Endothelial cell of umbilical vein (primary cell): ENCODE measurements at regions of chr4 and their contacts with region 1.

Region 1: DNA sequence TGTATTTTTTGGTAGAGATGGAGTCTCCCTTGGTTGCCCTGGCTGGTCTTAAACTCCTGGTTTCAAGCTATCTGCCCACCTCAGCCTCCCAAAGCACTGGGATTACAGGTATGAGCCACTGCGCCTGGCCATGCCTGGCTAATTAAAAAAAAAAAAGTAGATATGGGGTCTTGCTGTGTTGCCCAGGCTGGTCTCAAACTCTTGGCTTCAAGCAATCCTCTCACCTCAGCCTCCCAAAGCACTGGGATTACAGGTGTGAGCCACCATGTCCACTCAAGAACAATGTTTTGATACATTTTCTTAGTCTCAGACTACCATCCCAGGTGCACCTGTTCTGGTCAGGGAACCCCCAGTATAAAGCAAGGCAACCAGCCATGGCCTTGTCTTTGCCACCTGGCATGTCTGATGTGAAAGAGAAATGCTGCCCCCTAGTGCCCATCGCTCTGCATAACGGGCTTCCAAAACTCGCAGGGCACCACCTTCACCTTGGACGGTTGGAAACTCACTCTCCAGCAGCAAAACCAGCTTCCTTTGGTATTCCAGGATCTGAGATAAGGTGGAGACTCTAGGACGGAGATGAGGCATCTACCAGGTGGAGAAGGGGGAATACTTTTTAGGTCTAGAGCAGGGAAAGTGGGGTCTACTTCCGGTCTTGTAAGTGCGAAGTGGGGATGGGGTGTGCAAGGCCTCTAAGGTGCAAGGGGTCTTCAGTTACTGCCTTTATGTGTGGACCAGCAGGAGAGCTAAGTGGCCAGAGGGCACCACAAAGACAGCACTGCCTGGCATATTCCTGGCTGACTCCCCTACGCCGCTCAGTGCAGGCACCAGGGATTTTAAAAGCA is 47.7 kb upstream of the AFAP1 start:
- DNase-seq: peak; percentile 74
- H3K4me3 ChIP-seq: no peak overlapping the region
- H3K27ac ChIP-seq: no peak overlapping the region
- H3K4me1 ChIP-seq: peaks cover 12% of the 10 kb centered on the region
- H3K27me3 ChIP-seq: no peaks in the 10 kb centered on the region
- CTCF ChIP-seq: peak; percentile 84 to 86
- POLR2A ChIP-seq: no peak

Region 2: GRCh38 chr4:7761720-7762119 is 225.6 kb before region 1 on chr4:
- CTCF ChIA-PET with region 1: interaction called, 10 read pairs
- POLR2A ChIA-PET with region 1: no interaction called
- dilution Hi-C with region 1: no loop called
- intact Hi-C with region 1: loop called (anchors 2 kb)
- DNase-seq: peak; percentile 61
- H3K4me3 ChIP-seq: no peak overlapping the region
- H3K27ac ChIP-seq: no peak overlapping the region
- H3K4me1 ChIP-seq: peaks cover 9% of the 10 kb centered on the region
- H3K27me3 ChIP-seq: no peaks in the 10 kb centered on the region
- CTCF ChIP-seq: peak; percentile 70 to 82
- POLR2A ChIP-seq: no peak

Region 3: GRCh38 chr4:7861440-7861881 is 125.9 kb before region 1 on chr4:
- CTCF ChIA-PET with region 1: no interaction called
- POLR2A ChIA-PET with region 1: no interaction called
- dilution Hi-C with region 1: no loop called
- intact Hi-C with region 1: loop called (anchors 1 kb)
- DNase-seq: peak; percentile 90
- H3K4me3 ChIP-seq: peak overlapping the region in 1 of 3 experiments; percentile 42
- H3K27ac ChIP-seq: peak overlapping the region; percentile 99
- H3K4me1 ChIP-seq: peaks cover 55% of the 10 kb centered on the region
- H3K27me3 ChIP-seq: no peaks in the 10 kb centered on the region
- CTCF ChIP-seq: no peak
- POLR2A ChIP-seq: no peak

Region 4: DNA sequence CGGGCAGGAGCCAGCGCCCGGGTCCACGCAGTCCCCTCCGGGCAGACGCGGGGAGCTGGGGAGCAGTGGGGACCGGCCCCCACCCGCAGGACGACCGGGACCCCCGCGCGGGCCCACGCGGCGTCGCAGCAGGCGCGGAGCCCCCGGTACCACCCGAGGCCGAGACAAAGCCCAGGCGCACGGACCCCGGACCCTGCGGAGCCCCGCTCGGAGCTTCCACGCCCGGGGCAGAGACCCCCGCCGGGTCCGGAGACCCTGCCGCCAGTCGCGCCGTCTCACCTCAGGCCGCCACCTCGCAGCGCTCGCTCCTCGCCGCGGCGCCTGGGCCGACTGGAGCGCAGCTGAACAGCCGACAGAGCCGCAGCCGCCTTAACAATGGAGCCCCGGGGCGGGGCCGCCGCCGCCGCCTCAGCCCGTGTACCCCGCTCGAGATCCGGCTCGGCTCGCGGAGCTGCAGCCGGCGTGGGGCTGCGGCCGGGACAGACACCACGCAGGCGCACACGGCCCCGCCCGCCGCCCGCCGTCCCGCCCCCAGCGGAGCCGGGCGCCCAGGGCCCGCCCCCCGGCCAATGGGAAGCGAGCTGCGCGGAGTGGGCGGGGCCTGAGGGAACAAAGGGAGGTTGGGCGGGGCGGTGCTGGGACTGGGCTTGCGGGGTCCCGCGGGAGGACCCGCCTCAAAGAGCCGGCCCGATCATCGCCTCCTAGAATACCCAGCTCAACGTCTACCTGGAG is 47.8 kb before region 1 on chr4 and contains the start of gene AFAP1:
- CTCF ChIA-PET with region 1: interaction called, 16 read pairs
- POLR2A ChIA-PET with region 1: interaction called, 9 read pairs
- dilution Hi-C with region 1: no loop called
- intact Hi-C with region 1: loop called (anchors 1 kb)
- DNase-seq: peak; percentile 93
- H3K4me3 ChIP-seq: peak within 1 kb of the TSS; percentile 47 to 93 (median 88)
- H3K27ac ChIP-seq: peak within 1 kb of the TSS; percentile 80
- H3K4me1 ChIP-seq: peaks cover 31% of the 10 kb centered on the region
- H3K27me3 ChIP-seq: no peaks in the 10 kb centered on the region
- CTCF ChIP-seq: no peak
- POLR2A ChIP-seq: peak; percentile 93
- total RNA-seq, gene AFAP1: 93.3 and 103 TPM in 2 replicates

Region 5: DNA sequence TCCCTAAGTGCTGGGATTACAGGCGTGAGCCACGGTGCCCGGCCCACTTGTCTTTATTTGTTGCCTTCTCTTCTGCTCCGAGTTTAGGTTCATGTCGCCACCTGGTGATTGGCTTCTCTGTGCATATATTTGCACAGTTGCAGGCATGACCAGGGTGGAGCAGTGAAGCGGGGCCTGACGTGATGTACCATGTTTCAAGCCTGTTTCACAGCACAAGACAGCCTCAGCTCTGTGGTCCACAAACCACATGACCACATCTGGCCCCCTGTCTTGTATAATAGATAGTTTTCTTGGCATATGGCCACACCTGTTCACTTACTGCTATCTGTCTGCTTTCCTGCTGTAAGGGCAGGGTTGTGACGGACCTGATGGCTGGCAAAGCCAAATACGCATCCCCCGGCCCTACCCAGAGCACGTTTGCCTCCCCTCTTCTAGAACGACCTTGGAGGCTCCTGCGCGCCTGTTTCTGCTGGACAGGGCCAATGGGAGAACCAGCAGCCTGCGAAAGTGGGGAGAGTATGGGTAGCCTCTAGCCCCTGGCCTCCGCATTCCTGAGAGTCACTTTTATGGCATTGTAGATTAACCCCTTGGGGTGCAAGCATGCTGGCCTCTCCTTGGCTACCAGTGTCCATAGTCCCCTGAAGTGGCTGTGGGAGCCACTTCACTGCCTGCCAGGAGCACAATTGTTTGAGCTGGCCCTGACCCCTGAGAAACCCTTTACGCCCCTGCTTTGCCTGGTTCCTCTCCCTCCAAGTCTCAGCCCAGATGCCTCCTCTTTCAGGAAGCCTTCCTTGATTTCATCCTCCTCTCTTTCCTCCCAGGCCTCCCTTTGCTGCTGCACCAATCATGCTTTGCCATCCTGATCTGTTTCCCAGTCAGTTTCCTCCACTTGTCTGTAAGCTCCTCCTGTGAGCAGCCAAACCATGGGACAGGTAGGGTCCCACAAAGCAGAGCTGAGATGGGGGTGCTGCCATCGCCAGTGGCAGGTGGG is 205.7 kb after region 1 on chr4:
- CTCF ChIA-PET with region 1: no interaction called
- POLR2A ChIA-PET with region 1: no interaction called
- dilution Hi-C with region 1: no loop called
- intact Hi-C with region 1: loop called (anchors 5 kb)
- DNase-seq: peak; percentile 79
- H3K4me3 ChIP-seq: no peak overlapping the region
- H3K27ac ChIP-seq: no peak overlapping the region
- H3K4me1 ChIP-seq: peaks cover 62% of the 10 kb centered on the region
- H3K27me3 ChIP-seq: no peaks in the 10 kb centered on the region
- CTCF ChIP-seq: peak; percentile 9 to 18
- POLR2A ChIP-seq: no peak